Head of caudate nucleus (tissue), 42 donors: ENCODE measurements at regions of chr16 and their contacts with region 1.

Region 1: DNA sequence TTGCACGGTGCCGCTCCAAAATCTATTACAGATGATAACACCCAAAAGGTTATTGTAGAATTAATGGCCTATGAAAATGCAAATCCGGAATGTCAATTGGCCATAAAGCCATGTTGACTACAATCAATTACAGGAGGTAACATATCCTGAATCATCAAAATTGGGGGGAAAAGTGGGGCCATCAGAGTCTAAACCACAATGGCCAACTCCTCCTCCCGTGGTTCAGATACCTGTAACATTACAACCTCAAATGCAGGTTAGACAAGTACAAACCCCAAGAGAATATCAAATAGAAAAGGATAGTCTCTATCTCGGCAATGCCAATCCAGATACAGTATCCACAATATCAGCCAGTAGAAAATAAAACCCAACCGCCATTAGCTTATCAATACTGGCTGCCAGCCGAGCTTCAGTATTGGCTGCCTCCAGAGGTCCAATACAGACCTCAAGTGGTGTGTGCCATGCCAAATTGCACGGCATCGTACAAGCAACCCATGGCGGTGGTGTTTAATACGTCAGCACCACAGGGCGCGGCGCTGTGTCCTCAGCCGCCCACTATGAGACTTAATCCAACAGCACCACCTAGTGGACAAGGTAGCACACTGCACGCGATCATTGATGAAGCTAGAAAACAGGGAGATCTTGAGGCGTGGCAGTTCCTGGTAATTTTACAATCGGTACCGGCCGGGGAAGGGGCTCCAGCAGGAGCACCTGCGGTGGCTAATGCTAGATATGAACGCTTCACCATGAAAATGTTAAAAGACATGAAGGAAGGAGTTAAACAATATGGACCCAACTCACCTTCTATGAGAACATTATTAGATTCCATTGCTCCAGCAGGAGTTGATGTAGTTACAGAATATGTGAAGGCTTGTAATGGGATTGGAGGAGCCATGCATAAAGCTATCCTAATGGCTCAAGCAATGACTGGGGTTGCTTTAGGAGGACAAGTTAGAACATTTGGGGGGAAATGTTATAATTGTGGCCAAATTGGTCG is 15.2 kb downstream of the FLYWCH1 start:
- DNase-seq: peak; percentile 68 to 95 (median 87)

Region 2: DNA sequence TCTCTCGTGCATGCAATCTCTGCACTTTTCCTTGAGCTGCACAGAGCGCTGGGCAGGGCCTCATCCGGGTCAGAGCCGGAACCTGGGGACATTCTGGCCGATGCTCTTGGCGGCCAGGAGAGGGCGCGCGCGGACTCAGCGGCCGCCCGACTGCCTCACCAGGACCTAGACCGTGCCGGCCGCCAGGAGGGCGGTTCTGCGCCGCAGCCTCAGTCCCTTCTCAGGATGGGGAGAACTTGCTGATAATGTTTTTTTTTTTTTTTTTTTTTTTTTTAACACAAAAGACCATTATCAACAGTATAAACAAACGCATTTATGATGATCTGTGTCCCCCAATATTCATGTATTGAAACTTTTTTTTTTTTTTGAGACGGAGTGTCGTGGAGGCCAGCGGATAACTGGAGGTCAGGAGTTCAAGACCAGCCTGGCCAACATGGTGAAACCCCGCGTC is 52.0 kb before region 1 on chr16:
- intact Hi-C with region 1: loop called (anchors 5 kb)
- DNase-seq: peak; percentile 30 to 90 (median 79)

Region 3: GRCh38 chr16:3017794-3018506 is 91.0 kb after region 1 on chr16 and contains the start of gene CLDN6:
- intact Hi-C with region 1: no loop called
- DNase-seq: peak in 9 of 42 donors; percentile 19 to 58 (median 44)